Naive thymus-derived CD4-positive, alpha-beta T cell (primary cell): ENCODE measurements at regions of chr18 and their contacts with region 1.

Region 1: DNA sequence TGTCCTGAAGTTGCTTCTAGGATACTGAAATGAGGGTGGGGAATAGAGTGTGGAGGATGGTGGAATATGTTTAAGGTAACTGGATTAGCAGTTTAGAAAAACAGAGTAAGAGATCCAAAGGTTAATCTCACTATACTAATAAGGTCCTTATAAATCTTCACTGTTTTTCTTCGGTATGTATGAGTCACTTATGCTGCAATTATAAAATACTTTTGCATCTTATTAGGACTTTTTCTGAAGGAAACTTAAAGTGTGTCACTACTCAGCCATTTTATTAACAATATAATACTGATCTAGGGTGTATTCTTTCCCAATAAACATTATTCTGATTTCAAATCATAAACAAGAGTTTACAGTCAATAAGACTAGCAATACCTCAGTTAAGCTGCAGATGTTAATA is 182.3 kb downstream of the ZNF521 start:
- DNase-seq: no peak
- ATAC-seq: no peak
- H3K4me3 ChIP-seq: no peak overlapping the region
- H3K4me3 Mint-ChIP-seq: no peak overlapping the region
- H3K27ac ChIP-seq: no peak overlapping the region
- H3K27ac Mint-ChIP-seq: no peak overlapping the region
- H3K4me1 ChIP-seq: no peaks in the 10 kb centered on the region
- H3K4me1 Mint-ChIP-seq: peaks cover under 1 to 15% (median 11%) of the 10 kb centered on the region in 7 donors
- H3K27me3 ChIP-seq: no peaks in the 10 kb centered on the region
- H3K27me3 Mint-ChIP-seq: peaks cover 0 to 4% (median 0%) of the 10 kb centered on the region in 5 donors

Region 2: GRCh38 chr18:25210622-25211021 is 40.9 kb after region 1 on chr18:
- CTCF ChIA-PET with region 1: no interaction called
- POLR2A ChIA-PET with region 1: no interaction called
- intact Hi-C with region 1: no loop called
- DNase-seq: no peak
- ATAC-seq: no peak
- H3K4me3 ChIP-seq: no peak overlapping the region
- H3K4me3 Mint-ChIP-seq: no peak overlapping the region
- H3K27ac ChIP-seq: no peak overlapping the region
- H3K27ac Mint-ChIP-seq: no peak overlapping the region
- H3K4me1 ChIP-seq: no peaks in the 10 kb centered on the region
- H3K4me1 Mint-ChIP-seq: no peaks in the 10 kb centered on the region
- H3K27me3 ChIP-seq: no peaks in the 10 kb centered on the region
- H3K27me3 Mint-ChIP-seq: peaks cover 0 to 22% (median 0%) of the 10 kb centered on the region in 5 donors

Region 3: DNA sequence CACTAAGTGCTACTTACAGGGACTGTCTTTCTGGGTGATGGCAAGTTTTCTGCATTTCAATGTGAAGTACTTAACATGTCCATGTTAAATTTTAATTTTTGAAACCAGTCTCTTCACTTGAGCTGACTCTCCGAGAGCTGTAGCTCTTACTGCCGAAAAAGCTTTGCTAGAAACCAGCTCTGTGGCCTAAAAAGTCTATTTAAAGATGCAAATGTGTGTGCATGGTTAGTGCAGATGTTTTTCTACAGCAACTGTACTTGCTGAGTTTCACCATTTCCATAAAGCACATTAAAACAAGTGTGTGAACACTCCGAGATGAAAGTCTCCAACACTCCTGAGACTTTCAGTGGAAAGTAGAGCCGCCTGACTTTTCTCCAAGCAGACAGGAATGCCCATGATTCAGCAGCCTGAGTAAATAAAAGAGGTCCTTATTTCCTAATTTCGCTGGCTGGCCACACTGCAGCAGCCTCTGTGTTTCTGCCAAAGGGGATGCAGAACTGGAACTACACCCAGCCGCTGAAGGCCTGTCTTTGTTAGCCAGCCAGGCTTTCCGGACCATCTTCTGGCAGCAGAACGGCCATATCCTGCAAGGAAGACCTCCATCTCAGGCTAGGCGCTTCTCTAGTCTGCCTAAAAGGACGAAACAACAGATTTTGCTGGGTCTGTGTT is 61.1 kb after region 1 on chr18:
- CTCF ChIA-PET with region 1: no interaction called
- POLR2A ChIA-PET with region 1: no interaction called
- intact Hi-C with region 1: loop called in 1 of 2 experiments (anchors 10 kb)
- DNase-seq: no peak
- ATAC-seq: peak; percentile 54
- H3K4me3 ChIP-seq: no peak overlapping the region
- H3K4me3 Mint-ChIP-seq: no peak overlapping the region
- H3K27ac ChIP-seq: no peak overlapping the region
- H3K27ac Mint-ChIP-seq: no peak overlapping the region
- H3K4me1 ChIP-seq: no peaks in the 10 kb centered on the region
- H3K4me1 Mint-ChIP-seq: no peaks in the 10 kb centered on the region
- H3K27me3 ChIP-seq: no peaks in the 10 kb centered on the region
- H3K27me3 Mint-ChIP-seq: peaks cover 0 to 27% (median 0%) of the 10 kb centered on the region in 5 donors